ENCODE measurements at regions of chr1 and their contacts with region 1.

Region 1: DNA sequence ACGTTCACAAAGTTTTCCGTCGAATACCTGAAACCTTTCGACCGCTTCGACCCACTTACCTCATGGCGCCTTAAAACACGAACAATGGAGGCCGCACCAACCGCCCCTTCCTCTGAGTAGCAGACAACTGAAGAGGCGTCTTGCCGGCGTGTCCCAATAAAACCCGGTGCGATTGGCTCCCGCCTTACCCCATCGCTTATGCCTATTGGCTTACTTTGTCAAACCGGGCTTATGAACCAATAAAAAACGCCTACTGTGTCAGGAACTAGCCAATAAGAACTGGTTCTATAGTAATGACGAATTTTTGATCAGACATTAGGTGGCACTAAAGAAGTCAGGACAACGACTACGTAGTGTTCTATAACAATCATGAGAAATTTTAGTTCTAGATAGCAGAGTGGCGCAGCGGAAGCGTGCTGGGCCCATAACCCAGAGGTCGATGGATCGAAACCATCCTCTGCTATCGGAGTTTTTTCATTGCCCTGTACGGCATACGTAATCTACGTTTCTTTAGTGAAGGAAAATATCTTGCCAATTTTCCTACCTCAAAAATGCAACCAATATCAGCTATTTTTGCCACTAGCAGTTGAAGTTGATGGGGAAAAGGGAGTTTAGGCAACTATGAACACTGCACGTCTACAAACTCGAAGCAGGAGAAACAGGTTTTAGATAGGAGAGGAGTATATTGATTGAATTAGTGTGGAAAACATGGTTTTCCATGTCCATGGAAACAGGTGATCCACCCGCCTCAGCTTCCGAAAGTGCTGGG is at the start of gene ILF2:
- DNase-seq: peak; percentile 96
- CTCF ChIP-seq: peak; percentile 35

Region 2: GRCh38 chr1:153749408-153750005 is 78.5 kb after region 1 on chr1:
- in situ Hi-C with region 1: loop called (anchors 10 kb)
- DNase-seq: peak; percentile 85
- CTCF ChIP-seq: peak; percentile 90

Region 3: GRCh38 chr1:153958111-153958960 is 287.3 kb after region 1 on chr1 and contains the start of gene CRTC2:
- in situ Hi-C with region 1: no loop called
- DNase-seq: peak; percentile 98
- CTCF ChIP-seq: peak; percentile 11

Region 4: GRCh38 chr1:153985941-153986761 is 315.1 kb after region 1 on chr1 and contains the start of gene RAB13:
- in situ Hi-C with region 1: loop called (anchors 10 kb)
- DNase-seq: peak; percentile 57
- CTCF ChIP-seq: no peak